ENCODE measurements at regions of chr3 and their contacts with region 1.

Region 1: DNA sequence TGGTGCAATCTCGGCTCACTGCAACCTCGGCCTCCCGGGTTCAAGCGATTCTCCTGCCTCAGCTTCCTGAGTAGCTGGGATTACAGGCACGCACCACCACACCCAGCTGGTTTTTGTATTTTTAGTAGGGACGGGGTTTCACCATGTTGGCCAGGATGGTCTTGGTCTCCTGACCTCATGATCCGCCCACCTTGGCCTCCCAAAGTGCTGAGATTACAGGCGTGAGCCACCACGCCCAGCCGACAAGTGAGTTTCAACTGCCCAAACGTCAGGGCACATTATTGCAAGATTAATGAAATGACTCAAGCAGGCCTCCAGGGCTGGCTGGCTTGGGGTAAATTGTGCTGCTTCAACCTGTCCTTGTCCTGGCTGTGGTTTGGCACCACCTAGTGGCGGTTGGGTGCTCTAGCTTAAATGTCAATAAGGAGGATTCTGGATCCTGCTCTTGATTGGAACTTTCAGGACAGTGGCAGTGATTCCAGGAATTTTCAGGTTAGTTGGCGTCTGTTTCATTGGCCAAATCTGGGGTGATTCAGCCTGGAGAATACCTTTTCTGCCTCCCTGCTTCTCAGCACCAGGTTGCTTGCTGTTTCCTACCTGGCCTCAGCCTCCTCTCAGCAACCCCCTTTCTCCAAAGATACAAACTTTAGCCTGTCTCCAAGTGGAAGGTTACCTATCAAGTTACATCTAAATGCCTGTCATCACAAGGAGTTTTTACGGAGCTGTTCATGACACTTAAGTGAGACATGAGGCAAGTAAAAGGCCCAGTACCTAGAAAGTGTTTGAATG is 32.4 kb upstream of the SACM1L start:
- DNase-seq: peak; percentile 95
- H3K4me3 Mint-ChIP-seq: no peak overlapping the region
- H3K27ac Mint-ChIP-seq: no peak overlapping the region
- H3K4me1 Mint-ChIP-seq: peaks cover 15% of the 10 kb centered on the region
- H3K27me3 Mint-ChIP-seq: no peaks in the 10 kb centered on the region

Region 2: DNA sequence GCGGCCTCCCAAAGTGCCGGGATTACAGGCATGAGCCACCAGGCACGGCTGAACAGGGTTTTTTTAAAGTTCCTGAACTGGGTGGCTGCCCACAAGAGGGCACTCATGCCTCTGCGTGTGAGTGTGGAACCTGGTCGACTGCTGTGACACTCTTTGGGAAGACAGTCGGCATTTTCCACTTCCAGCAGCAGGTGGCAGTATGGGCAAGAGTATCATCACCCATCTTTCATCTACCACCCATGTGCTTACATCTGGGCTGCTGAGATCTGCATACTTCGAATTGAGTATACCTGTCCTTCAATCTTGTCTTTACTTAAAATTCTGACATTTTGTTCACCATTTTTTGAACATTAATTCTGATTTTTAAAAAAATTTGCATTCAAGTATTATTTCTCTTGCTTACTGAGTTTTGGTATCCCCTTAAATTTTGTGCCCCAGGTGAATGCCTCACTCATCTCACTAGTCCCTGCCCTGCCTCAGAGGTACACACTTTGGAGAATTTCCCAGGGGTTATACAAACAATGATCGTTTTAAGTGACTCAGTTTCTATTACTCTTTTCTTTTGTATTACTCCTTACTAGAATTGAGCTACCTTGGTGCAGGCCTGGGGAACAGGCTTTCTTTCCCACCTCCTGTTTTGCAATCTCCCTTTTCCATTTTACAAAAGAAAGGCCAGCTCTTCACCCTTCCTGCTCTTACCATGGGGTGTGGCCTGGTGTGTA is 618.9 kb before region 1 on chr3:
- CTCF ChIA-PET with region 1: interaction called, 8 read pairs
- intact Hi-C with region 1: loop called (anchors 1 kb)
- DNase-seq: peak; percentile 97
- H3K4me3 Mint-ChIP-seq: peak overlapping the region; percentile 17
- H3K27ac Mint-ChIP-seq: no peak overlapping the region
- H3K4me1 Mint-ChIP-seq: peaks cover 41% of the 10 kb centered on the region
- H3K27me3 Mint-ChIP-seq: peaks cover 16% of the 10 kb centered on the region

Region 3: GRCh38 chr3:45513041-45513440 is 143.7 kb before region 1 on chr3:
- CTCF ChIA-PET with region 1: interaction called, 71 read pairs
- intact Hi-C with region 1: loop called (anchors 1 kb)
- DNase-seq: no peak
- H3K4me3 Mint-ChIP-seq: no peak overlapping the region
- H3K27ac Mint-ChIP-seq: no peak overlapping the region
- H3K4me1 Mint-ChIP-seq: no peaks in the 10 kb centered on the region
- H3K27me3 Mint-ChIP-seq: no peaks in the 10 kb centered on the region

Region 4: GRCh38 chr3:45546716-45547701 is 109.8 kb before region 1 on chr3:
- CTCF ChIA-PET with region 1: interaction called, 16 read pairs
- intact Hi-C with region 1: no loop called
- DNase-seq: peak; percentile 57
- H3K4me3 Mint-ChIP-seq: no peak overlapping the region
- H3K27ac Mint-ChIP-seq: no peak overlapping the region
- H3K4me1 Mint-ChIP-seq: no peaks in the 10 kb centered on the region
- H3K27me3 Mint-ChIP-seq: no peaks in the 10 kb centered on the region

Region 5: DNA sequence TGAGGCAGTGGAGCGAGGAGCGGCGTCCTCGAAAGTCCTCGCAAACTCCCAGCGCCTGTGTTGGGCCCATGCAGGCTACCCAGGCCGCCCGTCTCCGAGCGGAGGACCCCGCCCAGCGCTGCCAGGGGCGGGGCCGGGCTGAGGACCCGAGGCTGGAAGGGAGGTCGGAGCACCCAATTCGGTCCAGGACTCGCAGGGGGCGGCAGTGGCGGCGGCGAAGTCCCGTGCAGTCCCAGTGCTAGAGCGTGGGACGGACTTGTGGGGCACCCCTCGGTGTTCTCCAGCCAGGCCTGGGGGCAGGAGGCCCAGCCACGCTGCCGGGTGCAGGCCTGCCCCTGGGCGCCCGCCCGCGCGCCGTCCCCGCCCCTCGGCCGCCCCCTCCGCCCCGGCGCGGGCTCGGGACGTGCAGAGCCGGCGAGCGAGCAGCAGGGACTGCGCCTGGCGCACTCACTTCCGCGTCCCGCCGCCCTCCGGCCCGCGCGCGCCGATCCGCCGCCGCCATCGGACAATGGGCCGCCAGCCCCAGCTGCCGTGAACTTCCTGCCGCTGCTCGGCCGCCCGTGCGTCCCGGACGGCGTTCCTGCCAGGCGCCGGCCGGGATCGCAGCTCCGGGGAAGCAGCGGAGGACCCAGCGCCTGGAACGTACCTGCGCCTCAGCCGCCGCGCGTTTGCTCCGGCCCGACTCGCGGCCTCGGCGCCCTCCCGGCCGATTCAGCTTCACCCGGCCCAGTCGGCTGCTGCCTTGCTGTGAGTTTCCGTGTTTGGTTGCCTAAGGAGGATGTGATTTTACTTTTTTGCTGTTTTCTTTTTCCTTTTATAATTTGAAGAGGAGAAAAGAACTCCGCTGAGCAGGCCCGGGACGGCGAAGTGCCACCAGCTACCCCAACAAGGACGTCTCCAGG is 62.8 kb before region 1 on chr3:
- CTCF ChIA-PET with region 1: interaction called, 36 read pairs
- intact Hi-C with region 1: loop called (anchors 1 kb)
- DNase-seq: peak; percentile 61
- H3K4me3 Mint-ChIP-seq: peak overlapping the region; percentile 80
- H3K27ac Mint-ChIP-seq: peak overlapping the region; percentile 84
- H3K4me1 Mint-ChIP-seq: peaks cover 48% of the 10 kb centered on the region
- H3K27me3 Mint-ChIP-seq: no peaks in the 10 kb centered on the region

Region 6: DNA sequence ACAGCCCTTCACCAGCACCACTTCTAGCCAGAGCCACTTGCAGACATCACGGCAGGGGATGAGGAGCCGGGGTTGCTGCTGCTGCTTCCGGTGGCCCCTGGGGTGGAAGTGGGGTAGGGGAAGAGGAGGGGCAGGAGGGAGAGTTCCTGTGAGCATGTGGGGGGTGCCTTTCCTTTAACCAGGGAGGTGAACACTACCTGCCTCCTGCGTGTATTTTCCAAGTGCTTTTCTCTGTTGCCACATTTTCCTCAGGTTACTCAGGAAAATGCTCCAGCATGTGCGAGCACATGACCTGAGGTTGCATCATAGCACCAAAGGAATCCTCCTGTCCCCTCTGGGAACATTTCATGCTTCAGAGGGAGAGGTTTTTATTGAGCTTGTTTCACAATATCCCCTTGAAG is 20.3 kb after region 1 on chr3:
- CTCF ChIA-PET with region 1: interaction called, 18 read pairs
- intact Hi-C with region 1: no loop called
- DNase-seq: peak; percentile 78
- H3K4me3 Mint-ChIP-seq: peak overlapping the region; percentile 63
- H3K27ac Mint-ChIP-seq: peak overlapping the region; percentile 89
- H3K4me1 Mint-ChIP-seq: peaks cover 28% of the 10 kb centered on the region
- H3K27me3 Mint-ChIP-seq: no peaks in the 10 kb centered on the region

Region 7: GRCh38 chr3:45704301-45704943 is 47.7 kb after region 1 on chr3:
- CTCF ChIA-PET with region 1: interaction called, 11 read pairs
- intact Hi-C with region 1: no loop called
- DNase-seq: no peak
- H3K4me3 Mint-ChIP-seq: no peak overlapping the region
- H3K27ac Mint-ChIP-seq: no peak overlapping the region
- H3K4me1 Mint-ChIP-seq: peaks cover 41% of the 10 kb centered on the region
- H3K27me3 Mint-ChIP-seq: no peaks in the 10 kb centered on the region

Region 8: GRCh38 chr3:46006238-46007032 is 349.7 kb after region 1 on chr3:
- CTCF ChIA-PET with region 1: no interaction called
- intact Hi-C with region 1: no loop called
- DNase-seq: no peak
- H3K4me3 Mint-ChIP-seq: no peak overlapping the region
- H3K27ac Mint-ChIP-seq: no peak overlapping the region
- H3K4me1 Mint-ChIP-seq: peaks cover 6% of the 10 kb centered on the region
- H3K27me3 Mint-ChIP-seq: no peaks in the 10 kb centered on the region